ENCODE measurements at regions of chr6 and their contacts with region 1.

Region 1: DNA sequence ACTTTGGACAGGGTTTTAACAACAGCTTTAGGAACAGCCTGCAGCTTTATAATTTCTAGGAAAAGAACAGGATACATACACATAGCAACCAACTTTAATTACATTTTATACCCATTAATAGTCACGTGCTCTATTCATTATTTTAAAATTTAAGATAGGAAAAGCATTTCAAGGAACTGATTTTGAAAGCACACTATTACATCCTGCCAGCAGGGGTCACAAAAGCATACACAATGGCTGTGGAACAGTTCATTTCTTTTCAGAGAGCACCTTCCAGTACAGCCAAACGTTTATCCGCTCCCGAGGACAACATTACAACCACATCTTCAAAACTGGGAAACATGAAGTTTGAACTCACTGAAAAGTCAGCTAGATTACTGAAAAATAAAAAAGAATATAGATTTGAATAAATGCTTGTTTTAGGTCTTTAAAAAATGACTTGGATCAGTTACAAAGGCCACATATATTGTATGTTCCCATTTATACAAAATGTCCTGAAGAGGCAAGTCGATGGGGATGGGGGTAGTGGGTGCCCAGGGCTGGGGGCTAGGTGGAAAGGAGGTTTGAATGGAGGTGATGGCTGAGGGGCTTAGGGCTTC is 104.6 kb upstream of the EXOC2 start:
- DNase-seq: peak; percentile 90
- H3K4me3 ChIP-seq: no peak overlapping the region
- H3K27ac ChIP-seq: no peak overlapping the region
- H3K4me1 ChIP-seq: peaks cover 0 to 17% (median 7%) of the 10 kb centered on the region in 4 donors
- H3K27me3 ChIP-seq: peaks cover 0 to 5% (median 0%) of the 10 kb centered on the region in 4 donors
- CTCF ChIP-seq: peak; percentile 76 to 83 (median 80)
- EP300 ChIP-seq: no peak
- POLR2A ChIP-seq: no peak

Region 2: GRCh38 chr6:411421-412145 is 386.0 kb before region 1 on chr6:
- intact Hi-C with region 1: no loop called
- DNase-seq: no peak
- H3K4me3 ChIP-seq: no peak overlapping the region
- H3K27ac ChIP-seq: no peak overlapping the region
- H3K4me1 ChIP-seq: peaks cover 0 to 8% (median 3%) of the 10 kb centered on the region in 4 donors
- H3K27me3 ChIP-seq: peaks cover 0 to 34% (median 0%) of the 10 kb centered on the region in 4 donors
- CTCF ChIP-seq: no peak
- EP300 ChIP-seq: no peak
- POLR2A ChIP-seq: no peak

Region 3: GRCh38 chr6:593139-593906 is 204.3 kb before region 1 on chr6:
- intact Hi-C with region 1: loop called (anchors 10 kb)
- DNase-seq: no peak
- H3K4me3 ChIP-seq: no peak overlapping the region
- H3K27ac ChIP-seq: peak overlapping the region; percentile 70 to 76 (median 74)
- H3K4me1 ChIP-seq: peaks cover 0 to 36% (median 20%) of the 10 kb centered on the region in 4 donors
- H3K27me3 ChIP-seq: no peaks in the 10 kb centered on the region
- CTCF ChIP-seq: peak; percentile 68 to 81 (median 76)
- EP300 ChIP-seq: no peak
- POLR2A ChIP-seq: no peak

Region 4: DNA sequence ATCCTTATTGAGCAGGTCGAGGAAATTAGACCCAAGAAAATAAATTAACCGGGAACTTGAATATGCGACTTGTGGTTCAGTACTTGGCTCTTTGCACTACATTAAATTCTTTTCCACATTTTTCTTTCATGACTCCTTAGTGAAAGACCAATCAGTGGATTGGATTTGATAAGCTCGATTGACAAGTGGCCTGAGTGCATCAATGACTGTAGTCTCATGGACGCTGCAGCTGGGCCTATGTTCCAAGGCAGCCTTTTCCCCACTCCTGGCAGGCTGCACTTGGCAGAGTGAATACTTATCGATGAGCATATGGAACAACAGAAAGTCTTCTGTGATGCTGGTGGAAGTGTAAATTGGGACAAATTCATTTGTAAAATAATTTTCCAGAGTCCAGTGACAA is 106.2 kb after region 1 on chr6:
- intact Hi-C with region 1: loop called (anchors 10 kb)
- DNase-seq: no peak
- H3K4me3 ChIP-seq: no peak overlapping the region
- H3K27ac ChIP-seq: no peak overlapping the region
- H3K4me1 ChIP-seq: peaks cover 0 to 22% (median 19%) of the 10 kb centered on the region in 4 donors
- H3K27me3 ChIP-seq: no peaks in the 10 kb centered on the region
- CTCF ChIP-seq: no peak
- EP300 ChIP-seq: no peak
- POLR2A ChIP-seq: no peak

Region 5: GRCh38 chr6:1381481-1382330 is 584.1 kb after region 1 on chr6:
- intact Hi-C with region 1: loop called (anchors 5 kb)
- DNase-seq: no peak
- H3K4me3 ChIP-seq: peak overlapping the region; percentile 60 to 86 (median 74)
- H3K27ac ChIP-seq: peak overlapping the region; percentile 90 to 97 (median 94)
- H3K4me1 ChIP-seq: peaks cover 45 to 90% (median 83%) of the 10 kb centered on the region in 4 donors
- H3K27me3 ChIP-seq: peaks cover 0 to 78% (median 8%) of the 10 kb centered on the region in 4 donors
- CTCF ChIP-seq: peak; percentile 90 to 99 (median 97)
- EP300 ChIP-seq: no peak
- POLR2A ChIP-seq: no peak

Region 6: DNA sequence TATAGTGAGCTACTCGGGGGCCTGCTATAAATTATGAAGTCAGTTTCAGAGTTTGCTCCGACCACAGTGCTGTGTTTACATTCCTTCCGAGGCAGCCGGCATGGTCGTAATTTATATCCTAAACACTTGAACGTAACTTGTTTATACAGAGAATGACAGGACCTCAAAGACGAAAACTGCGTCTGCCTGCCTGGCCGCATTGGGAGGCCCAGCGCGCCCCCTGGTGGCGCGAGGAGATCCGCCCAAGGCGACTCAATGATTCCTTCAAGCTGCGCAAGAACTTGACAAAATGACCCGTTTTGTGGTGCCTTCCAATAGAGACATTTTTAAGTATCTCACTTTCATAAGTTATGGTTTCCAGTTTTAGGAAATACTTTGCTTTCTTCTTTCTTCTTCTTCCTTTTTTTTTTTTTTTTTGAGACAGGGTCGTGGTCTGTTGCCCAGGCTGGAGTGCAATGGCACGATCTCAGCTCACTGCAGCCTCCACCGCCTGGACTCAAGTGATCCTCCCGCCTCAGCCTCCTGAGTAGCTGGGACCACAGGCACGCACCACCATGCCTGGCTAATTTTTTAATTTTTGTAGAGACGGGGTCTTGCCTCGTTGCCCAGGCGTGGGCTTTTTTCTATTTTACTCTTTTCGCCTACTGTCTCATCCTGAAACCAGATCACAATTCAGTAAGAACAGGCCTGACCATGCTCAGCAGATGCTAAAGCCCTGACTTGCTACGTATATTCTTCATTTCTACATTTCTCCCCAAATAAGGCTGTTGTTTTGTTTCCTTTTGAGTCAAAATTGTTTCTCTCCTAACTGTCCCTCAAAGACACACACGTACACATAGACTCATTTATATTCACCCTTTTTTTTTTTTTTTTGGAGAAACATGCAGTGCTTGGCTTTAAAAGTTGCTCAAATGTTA is 599.6 kb after region 1 on chr6:
- intact Hi-C with region 1: loop called (anchors 2 kb)
- DNase-seq: peak; percentile 96
- H3K4me3 ChIP-seq: peak overlapping the region; percentile 69 to 86 (median 78)
- H3K27ac ChIP-seq: peak overlapping the region; percentile 90 to 97 (median 94)
- H3K4me1 ChIP-seq: peaks cover 7 to 70% (median 65%) of the 10 kb centered on the region in 4 donors
- H3K27me3 ChIP-seq: peaks cover 0 to 34% (median 0%) of the 10 kb centered on the region in 4 donors
- CTCF ChIP-seq: peak; percentile 94 to 98 (median 94)
- EP300 ChIP-seq: peak; percentile 61
- POLR2A ChIP-seq: no peak

Region 7: GRCh38 chr6:1436334-1437306 is 639.0 kb after region 1 on chr6:
- intact Hi-C with region 1: loop called (anchors 5 kb)
- DNase-seq: no peak
- H3K4me3 ChIP-seq: no peak overlapping the region
- H3K27ac ChIP-seq: no peak overlapping the region
- H3K4me1 ChIP-seq: peaks cover 0 to 9% (median 5%) of the 10 kb centered on the region in 4 donors
- H3K27me3 ChIP-seq: peaks cover 0 to 17% (median 0%) of the 10 kb centered on the region in 4 donors
- CTCF ChIP-seq: peak; percentile 66 to 86 (median 76)
- EP300 ChIP-seq: no peak
- POLR2A ChIP-seq: no peak

Measured in esophagus muscularis mucosa (tissue), 4 donors.